Motor neuron (in vitro differentiated cells): ENCODE measurements at regions of chr12 and their contacts with region 1.

Region 1: GRCh38 chr12:112382232-112382796 is at the start of gene HECTD4:
- ATAC-seq: peak; percentile 89 to 95 (median 91)
- H3K4me3 ChIP-seq: peak within 1 kb of the TSS; percentile 89 to 100 (median 93)
- H3K27ac ChIP-seq: peak within 1 kb of the TSS; percentile 88 to 95
- H3K4me1 ChIP-seq: peaks cover 19 to 20% of the 10 kb centered on the region in 2 donors
- total RNA-seq, gene HECTD4: 15.2 to 80.4 (median 40.3) TPM

Region 2: DNA sequence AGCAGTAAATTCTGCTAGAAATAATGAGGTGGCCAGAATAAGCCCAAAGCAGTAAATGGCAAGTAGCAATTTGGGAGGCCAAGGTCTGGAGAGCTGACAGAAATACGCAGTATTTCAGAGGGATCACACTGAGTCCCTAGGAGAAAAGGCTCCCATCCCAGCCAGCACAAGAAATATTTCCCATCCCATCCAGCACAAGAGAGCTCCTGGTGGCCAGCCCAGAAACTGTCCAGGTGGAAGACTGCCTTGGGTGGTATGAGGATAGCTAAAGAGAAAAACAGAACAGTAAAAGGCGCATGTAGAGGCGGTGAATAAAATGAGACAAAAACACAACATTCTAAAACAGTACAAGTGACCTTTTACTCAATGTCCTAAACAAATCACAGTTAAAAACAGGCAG is 120.8 kb before region 1 on chr12:
- in situ Hi-C with region 1: loop called in 1 of 9 experiments (anchors 25 kb)
- ATAC-seq: no peak
- H3K4me3 ChIP-seq: no peak overlapping the region
- H3K27ac ChIP-seq: no peak overlapping the region
- H3K4me1 ChIP-seq: no peaks in the 10 kb centered on the region

Region 3: DNA sequence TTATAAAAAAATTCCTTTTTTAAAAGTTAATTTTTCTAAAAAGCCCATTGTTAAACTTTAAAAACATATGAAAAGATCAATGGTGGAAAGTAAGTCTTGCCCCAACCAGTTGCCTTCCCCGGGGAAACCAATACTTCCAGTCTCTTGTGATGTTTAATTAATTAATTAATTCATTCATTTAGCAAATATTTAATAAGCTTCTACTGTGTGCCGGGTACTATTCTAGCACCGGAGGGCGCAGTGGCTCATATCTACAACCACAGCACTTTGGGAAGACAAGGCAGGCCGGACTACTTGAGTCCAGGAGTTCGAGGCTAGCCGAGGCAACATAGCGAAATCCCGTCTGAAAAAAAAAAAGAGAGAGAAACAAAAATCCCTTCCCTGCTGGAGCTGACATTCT is 87.5 kb before region 1 on chr12:
- in situ Hi-C with region 1: loop called in 2 of 9 experiments (anchors 25 kb)
- ATAC-seq: no peak
- H3K4me3 ChIP-seq: no peak overlapping the region
- H3K27ac ChIP-seq: no peak overlapping the region
- H3K4me1 ChIP-seq: no peaks in the 10 kb centered on the region

Region 4: GRCh38 chr12:112331886-112332285 is 50.4 kb before region 1 on chr12:
- in situ Hi-C with region 1: no loop called
- ATAC-seq: no peak
- H3K4me3 ChIP-seq: no peak overlapping the region
- H3K27ac ChIP-seq: no peak overlapping the region
- H3K4me1 ChIP-seq: peaks cover 0 to 14% of the 10 kb centered on the region in 2 donors